Activated CD8-positive, alpha-beta T cell treated with anti-CD3 and anti-CD28 coated beads for 36 hours (primary cell): ENCODE measurements at regions of chr10 and their contacts with region 1.

Region 1: DNA sequence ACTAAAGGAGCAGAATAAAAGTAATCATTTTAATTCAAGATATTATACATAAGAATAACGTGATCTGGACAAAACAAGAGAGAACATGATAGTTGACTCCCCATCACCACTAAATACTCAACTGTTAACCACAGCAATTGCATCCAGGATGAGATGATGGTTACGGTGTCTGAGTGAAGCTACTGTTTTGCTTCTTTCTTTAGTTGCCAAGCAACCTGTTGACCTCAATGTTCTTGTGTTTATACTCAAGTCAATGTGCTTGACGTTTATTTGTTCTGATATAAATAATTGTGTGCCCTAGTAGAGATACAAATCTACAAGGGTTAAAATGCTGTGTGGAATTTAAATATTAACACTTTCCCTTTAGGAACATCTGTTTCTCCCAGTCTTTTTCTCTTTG is 31.4 kb upstream of the MPP7 start:
- DNase-seq: peak; percentile 62
- ATAC-seq: peak; percentile 55
- H3K4me3 Mint-ChIP-seq: peak overlapping the region; percentile 86
- H3K27ac Mint-ChIP-seq: peak overlapping the region; percentile 99
- H3K4me1 Mint-ChIP-seq: peaks cover 59% of the 10 kb centered on the region
- H3K27me3 Mint-ChIP-seq: no peaks in the 10 kb centered on the region
- CTCF ChIP-seq: no peak

Region 2: GRCh38 chr10:28312572-28312971 is 21.7 kb before region 1 on chr10:
- CTCF ChIA-PET with region 1: interaction called, 6 read pairs
- POLR2A ChIA-PET with region 1: interaction called, 17 read pairs
- intact Hi-C with region 1: no loop called
- DNase-seq: no peak
- ATAC-seq: no peak
- H3K4me3 Mint-ChIP-seq: no peak overlapping the region
- H3K27ac Mint-ChIP-seq: no peak overlapping the region
- H3K4me1 Mint-ChIP-seq: peaks cover 22% of the 10 kb centered on the region
- H3K27me3 Mint-ChIP-seq: no peaks in the 10 kb centered on the region
- CTCF ChIP-seq: no peak

Region 3: DNA sequence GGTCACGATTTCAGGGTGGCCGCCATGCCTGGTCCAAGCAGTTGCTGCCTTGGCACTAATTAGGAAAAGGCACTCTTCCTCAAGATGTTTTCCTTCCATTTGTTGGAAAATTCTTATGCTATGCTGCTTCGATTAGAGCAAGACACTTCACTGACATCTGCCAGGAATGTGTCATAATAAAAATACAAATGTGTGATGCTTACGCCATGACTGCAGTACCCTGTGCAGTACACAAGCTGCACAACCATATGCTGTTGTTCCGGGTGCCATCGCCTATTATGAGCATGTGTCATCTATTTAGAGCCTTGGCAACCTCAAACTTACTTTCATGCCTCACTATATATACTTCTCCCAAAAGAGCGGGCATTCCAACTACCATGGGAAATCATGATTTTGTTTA is 16.5 kb before region 1 on chr10:
- CTCF ChIA-PET with region 1: interaction called, 6 read pairs
- POLR2A ChIA-PET with region 1: interaction called, 17 read pairs
- intact Hi-C with region 1: no loop called
- DNase-seq: no peak
- ATAC-seq: no peak
- H3K4me3 Mint-ChIP-seq: no peak overlapping the region
- H3K27ac Mint-ChIP-seq: no peak overlapping the region
- H3K4me1 Mint-ChIP-seq: peaks cover 31% of the 10 kb centered on the region
- H3K27me3 Mint-ChIP-seq: no peaks in the 10 kb centered on the region
- CTCF ChIP-seq: no peak

Region 4: DNA sequence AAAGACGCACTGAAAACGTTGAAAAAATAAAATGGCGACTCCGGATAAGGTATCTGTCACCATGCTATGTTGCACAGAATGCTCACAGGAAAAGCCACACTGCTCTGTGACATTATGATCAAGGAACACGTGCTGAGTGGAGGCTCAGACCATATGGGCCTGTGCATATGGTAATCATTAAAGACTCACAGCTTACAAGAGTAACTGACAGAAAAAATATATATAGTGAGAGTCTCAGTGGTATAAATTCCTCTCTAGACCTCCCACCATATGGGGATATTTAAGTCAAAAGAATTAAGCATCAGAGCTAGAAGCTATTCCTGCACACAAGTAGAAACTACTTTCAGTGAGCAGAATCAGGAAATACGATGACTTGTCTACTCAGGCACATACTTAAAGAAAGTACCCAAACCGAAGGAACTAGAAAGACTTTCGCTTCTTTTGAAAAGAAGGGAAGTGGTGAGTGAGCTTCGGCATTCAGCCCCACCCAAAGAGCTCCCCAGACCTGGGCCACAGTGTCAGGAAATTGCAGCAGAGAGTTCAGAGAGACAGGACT is 33.7 kb after region 1 on chr10:
- CTCF ChIA-PET with region 1: interaction called, 19 read pairs
- POLR2A ChIA-PET with region 1: interaction called, 24 read pairs
- intact Hi-C with region 1: loop called (anchors 1 kb)
- DNase-seq: peak; percentile 75
- ATAC-seq: peak; percentile 93
- H3K4me3 Mint-ChIP-seq: peak overlapping the region; percentile 54
- H3K27ac Mint-ChIP-seq: peak overlapping the region; percentile 91
- H3K4me1 Mint-ChIP-seq: peaks cover 34% of the 10 kb centered on the region
- H3K27me3 Mint-ChIP-seq: no peaks in the 10 kb centered on the region
- CTCF ChIP-seq: no peak